Dendritic cell treated with granulocyte-macrophage colony-stimulating factor and Interleukin-4, amounts not matched to agents 40 ng/mL and 50 ng/mL, for 4 days (primary cell): ENCODE measurements at regions of chr3 and their contacts with region 1.

Region 1: DNA sequence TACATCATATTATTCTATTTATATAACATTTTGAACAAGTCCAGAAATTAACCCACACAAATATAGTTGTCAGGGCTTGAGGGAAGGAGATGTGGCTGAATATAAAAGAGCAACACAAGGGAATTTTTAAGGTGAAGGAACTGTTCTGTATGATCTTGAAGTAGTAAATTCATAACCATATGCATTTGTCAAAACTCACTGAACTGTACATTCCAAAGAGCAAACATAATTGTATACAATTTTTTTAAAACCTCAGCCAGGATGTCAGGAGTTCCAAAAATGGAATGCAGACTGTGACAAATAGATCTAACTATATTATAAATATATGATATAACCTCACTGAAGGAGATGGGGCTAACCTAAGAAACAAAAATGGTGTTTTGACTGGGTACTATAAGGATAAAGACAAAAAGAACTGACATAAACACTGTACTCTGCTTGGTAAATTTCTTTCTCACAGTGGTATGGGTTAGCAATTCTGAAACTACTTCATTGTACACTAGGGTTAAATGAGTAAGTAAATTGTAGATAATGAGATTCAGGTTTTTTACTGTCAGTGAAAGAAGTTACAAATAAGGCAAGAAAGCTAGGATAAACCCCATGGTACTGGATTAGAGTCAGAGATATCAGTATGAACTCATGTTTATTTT is 14.4 kb downstream of the GOLGB1 start:
- H3K4me3 Mint-ChIP-seq: no peak overlapping the region
- H3K27ac Mint-ChIP-seq: no peak overlapping the region
- H3K4me1 Mint-ChIP-seq: peaks cover 5% of the 10 kb centered on the region
- H3K27me3 Mint-ChIP-seq: no peaks in the 10 kb centered on the region

Region 2: DNA sequence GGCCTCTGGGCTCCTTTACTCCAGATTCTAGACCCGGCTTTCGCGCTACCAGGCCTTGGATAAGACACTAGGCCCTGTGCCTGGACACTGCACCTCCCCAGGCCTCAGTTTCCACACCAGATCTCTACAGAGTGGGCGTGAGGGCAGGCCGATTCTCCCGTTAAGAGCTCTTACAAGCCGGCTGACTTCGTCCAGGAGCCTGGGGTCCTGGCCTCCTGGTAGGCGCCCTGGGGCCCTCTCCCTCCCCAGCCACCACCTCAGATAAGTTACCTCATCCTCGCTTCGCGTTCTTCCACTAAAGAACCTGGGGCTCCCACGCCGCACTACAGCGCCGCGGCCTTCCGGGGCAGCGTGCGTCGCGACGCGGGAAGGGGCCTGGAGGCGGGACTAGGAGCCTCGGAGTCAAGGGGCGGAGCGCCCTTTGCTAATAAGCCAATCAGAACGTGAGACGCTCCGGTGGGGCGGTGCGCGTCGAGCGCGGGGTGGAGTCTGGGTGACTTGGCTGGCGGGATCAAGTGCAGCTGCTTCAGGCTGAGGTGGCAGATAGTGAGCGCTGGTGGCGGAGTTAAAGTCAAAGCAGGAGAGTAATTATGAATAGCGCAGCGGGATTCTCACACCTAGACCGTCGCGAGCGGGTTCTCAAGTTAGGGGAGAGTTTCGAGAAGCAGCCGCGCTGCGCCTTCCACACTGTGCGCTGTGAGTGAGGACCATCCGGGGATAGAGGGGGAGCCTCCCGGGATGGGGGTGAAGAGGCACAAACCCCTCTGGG is 99.7 kb after region 1 on chr3 and contains the starts of genes EAF2 and IQCB1:
- intact Hi-C with region 1: loop called (anchors 5 kb)
- H3K4me3 Mint-ChIP-seq: peak within 1 kb of the TSS; percentile 95
- H3K27ac Mint-ChIP-seq: peak within 1 kb of the TSS; percentile 98
- H3K4me1 Mint-ChIP-seq: peaks cover 28% of the 10 kb centered on the region
- H3K27me3 Mint-ChIP-seq: no peaks in the 10 kb centered on the region